Activated CD4-positive, alpha-beta memory T cell treated with anti-CD3 and anti-CD28 coated beads for 36 hours (primary cell): ENCODE measurements at regions of chr16 and their contacts with region 1.

Region 1: GRCh38 chr16:11977376-11978041 is 975 bp downstream of the SNX29 start:
- DNase-seq: no peak
- H3K4me3 Mint-ChIP-seq: peak overlapping the region; percentile 95
- H3K27ac Mint-ChIP-seq: peak overlapping the region; percentile 58
- H3K4me1 Mint-ChIP-seq: peaks cover 33% of the 10 kb centered on the region
- H3K27me3 Mint-ChIP-seq: no peaks in the 10 kb centered on the region

Region 2: GRCh38 chr16:11783319-11784037 is 194.0 kb before region 1 on chr16:
- CTCF ChIA-PET with region 1: no interaction called
- POLR2A ChIA-PET with region 1: no interaction called
- intact Hi-C with region 1: no loop called
- DNase-seq: peak; percentile 61
- H3K4me3 Mint-ChIP-seq: peak overlapping the region; percentile 78
- H3K27ac Mint-ChIP-seq: peak overlapping the region; percentile 100
- H3K4me1 Mint-ChIP-seq: peaks cover 68% of the 10 kb centered on the region
- H3K27me3 Mint-ChIP-seq: no peaks in the 10 kb centered on the region

Region 3: GRCh38 chr16:11851294-11852091 is 126.0 kb before region 1 on chr16 and contains the start of gene RSL1D1:
- CTCF ChIA-PET with region 1: no interaction called
- POLR2A ChIA-PET with region 1: no interaction called
- intact Hi-C with region 1: loop called (anchors 5 kb)
- DNase-seq: peak; percentile 96
- H3K4me3 Mint-ChIP-seq: peak within 1 kb of the TSS; percentile 94
- H3K27ac Mint-ChIP-seq: peak within 1 kb of the TSS; percentile 89
- H3K4me1 Mint-ChIP-seq: peaks cover 52% of the 10 kb centered on the region
- H3K27me3 Mint-ChIP-seq: no peaks in the 10 kb centered on the region
- total RNA-seq, gene RSL1D1: 287 to 296 TPM

Region 4: GRCh38 chr16:11896777-11897176 is 80.7 kb before region 1 on chr16:
- CTCF ChIA-PET with region 1: no interaction called
- POLR2A ChIA-PET with region 1: no interaction called
- intact Hi-C with region 1: no loop called
- DNase-seq: peak; percentile 30
- H3K4me3 Mint-ChIP-seq: no peak overlapping the region
- H3K27ac Mint-ChIP-seq: peak overlapping the region; percentile 77
- H3K4me1 Mint-ChIP-seq: peaks cover 48% of the 10 kb centered on the region
- H3K27me3 Mint-ChIP-seq: no peaks in the 10 kb centered on the region

Region 5: GRCh38 chr16:12386192-12386591 is 408.7 kb after region 1 on chr16:
- CTCF ChIA-PET with region 1: no interaction called
- POLR2A ChIA-PET with region 1: no interaction called
- intact Hi-C with region 1: no loop called
- DNase-seq: no peak
- H3K4me3 Mint-ChIP-seq: no peak overlapping the region
- H3K27ac Mint-ChIP-seq: no peak overlapping the region
- H3K4me1 Mint-ChIP-seq: no peaks in the 10 kb centered on the region
- H3K27me3 Mint-ChIP-seq: no peaks in the 10 kb centered on the region